Motor neuron (in vitro differentiated cells): ENCODE measurements at regions of chr5 and their contacts with region 1.

Region 1: DNA sequence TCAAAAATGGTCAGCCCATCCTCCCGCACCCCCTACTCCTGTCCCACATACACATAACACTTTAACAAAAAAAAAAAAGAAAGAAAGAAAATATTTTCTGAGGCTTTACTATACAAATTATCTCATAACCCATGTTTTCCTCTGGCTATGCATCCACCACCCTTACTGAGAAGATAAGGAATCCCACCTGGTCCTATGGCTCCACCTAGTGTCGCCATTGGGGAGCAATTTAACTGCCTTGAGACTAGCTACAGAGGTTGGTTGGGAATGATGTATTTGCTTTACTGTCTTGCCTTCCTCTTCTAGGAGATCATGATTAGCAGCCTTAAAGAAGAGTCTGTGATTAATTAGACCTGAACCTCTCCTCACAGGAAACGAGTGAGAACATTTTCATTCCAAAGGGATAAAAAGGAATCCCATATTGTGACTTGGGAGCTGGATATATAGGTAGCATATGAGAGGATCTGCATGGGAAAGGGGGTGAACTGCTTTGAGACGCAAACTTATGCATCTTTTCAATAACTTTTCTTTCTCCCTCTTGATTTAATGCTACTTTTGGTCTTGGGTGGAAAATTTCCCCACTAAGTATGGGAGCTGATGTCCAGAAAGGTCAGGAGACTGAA is 77.7 kb upstream of the SELENOP start:
- ATAC-seq: peak; percentile 73 to 98 (median 93)
- H3K4me3 ChIP-seq: no peak overlapping the region
- H3K27ac ChIP-seq: no peak overlapping the region
- H3K4me1 ChIP-seq: no peaks in the 10 kb centered on the region

Region 2: DNA sequence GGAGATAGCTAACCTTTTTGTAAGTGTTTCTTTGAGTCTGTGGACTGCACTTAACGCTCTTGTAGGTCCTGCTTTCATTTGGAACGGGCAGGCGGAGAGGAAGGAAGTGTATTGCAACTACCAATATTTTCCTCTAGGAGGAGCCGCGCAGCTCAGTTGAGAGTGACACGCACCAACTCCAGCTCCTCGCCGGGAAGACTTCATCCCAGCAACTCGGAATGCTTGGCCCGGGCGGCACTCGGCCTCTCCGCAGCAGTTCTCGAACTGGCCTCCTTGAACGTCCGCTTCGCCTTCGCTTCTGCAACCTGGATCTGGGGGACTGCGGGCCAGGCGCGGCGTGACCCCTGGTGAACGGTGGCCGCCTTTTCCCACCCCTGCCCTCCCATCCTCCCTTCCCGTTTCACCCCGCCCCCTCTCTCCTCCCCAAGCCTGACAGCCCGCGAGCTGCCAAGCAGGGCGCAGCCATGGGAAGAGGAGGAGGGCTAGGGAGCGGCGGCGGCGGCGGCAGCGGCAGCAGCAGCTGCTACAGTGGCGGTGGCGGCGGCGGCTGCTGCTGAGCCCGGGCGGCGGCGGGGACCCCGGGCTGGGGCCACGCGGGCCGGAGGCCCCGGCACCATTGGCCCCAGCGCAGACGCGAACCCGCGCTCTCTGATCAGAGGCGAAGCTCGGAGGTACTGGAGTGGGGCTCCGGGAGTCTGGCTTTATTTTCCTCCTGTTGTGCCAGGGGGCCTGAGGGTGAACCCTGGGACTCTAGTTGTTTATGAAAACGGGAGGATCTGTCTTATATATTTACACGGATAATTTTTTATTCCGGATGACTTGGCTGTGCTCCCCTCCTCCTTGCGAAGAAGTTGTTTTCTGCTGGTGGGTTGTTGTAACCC is 465.9 kb before region 1 on chr5 and contains the start of gene GHR:
- in situ Hi-C with region 1: loop called in 1 of 9 experiments (anchors 25 kb)
- ATAC-seq: peak; percentile 89 to 93 (median 92)
- H3K4me3 ChIP-seq: peak within 1 kb of the TSS; percentile 43 to 68 (median 62)
- H3K27ac ChIP-seq: peak within 1 kb of the TSS in 1 of 2 donors; percentile 67
- H3K4me1 ChIP-seq: peaks cover 3% of the 10 kb centered on the region in 2 donors
- total RNA-seq, gene GHR: 0.33 to 11.8 (median 2.2) TPM

Region 3: GRCh38 chr5:42583322-42583721 is 306.1 kb before region 1 on chr5:
- in situ Hi-C with region 1: loop called in 1 of 9 experiments (anchors 25 kb)
- ATAC-seq: peak; percentile 26 to 70 (median 56)
- H3K4me3 ChIP-seq: no peak overlapping the region
- H3K27ac ChIP-seq: no peak overlapping the region
- H3K4me1 ChIP-seq: peaks cover 2 to 7% of the 10 kb centered on the region in 2 donors

Region 4: GRCh38 chr5:42779083-42779482 is 110.3 kb before region 1 on chr5:
- in situ Hi-C with region 1: loop called in 2 of 9 experiments (anchors 25 kb)
- ATAC-seq: no peak
- H3K4me3 ChIP-seq: no peak overlapping the region
- H3K27ac ChIP-seq: no peak overlapping the region
- H3K4me1 ChIP-seq: no peaks in the 10 kb centered on the region

Region 5: GRCh38 chr5:43019614-43020293 is 130.3 kb after region 1 on chr5:
- in situ Hi-C with region 1: no loop called
- ATAC-seq: peak in 3 of 8 experiments; percentile 9 to 37 (median 36)
- H3K4me3 ChIP-seq: peak overlapping the region in 2 of 5 donors; percentile 6 to 60
- H3K27ac ChIP-seq: no peak overlapping the region
- H3K4me1 ChIP-seq: peaks cover 0 to 14% of the 10 kb centered on the region in 2 donors